Calu3 (cell line): ENCODE measurements at regions of chr3 and their contacts with region 1.

Region 1: GRCh38 chr3:12522721-12523120 is 22.6 kb downstream of the MKRN2OS start:
- DNase-seq: no peak
- H3K4me3 Mint-ChIP-seq: no peak overlapping the region
- H3K27ac Mint-ChIP-seq: no peak overlapping the region
- H3K4me1 Mint-ChIP-seq: no peaks in the 10 kb centered on the region
- H3K27me3 Mint-ChIP-seq: no peaks in the 10 kb centered on the region
- CTCF ChIP-seq: no peak

Region 2: GRCh38 chr3:12294885-12295580 is 227.7 kb before region 1 on chr3:
- CTCF ChIA-PET with region 1: no interaction called
- intact Hi-C with region 1: no loop called
- DNase-seq: no peak
- H3K4me3 Mint-ChIP-seq: peak overlapping the region; percentile 84
- H3K27ac Mint-ChIP-seq: no peak overlapping the region
- H3K4me1 Mint-ChIP-seq: peaks cover 31% of the 10 kb centered on the region
- H3K27me3 Mint-ChIP-seq: no peaks in the 10 kb centered on the region
- CTCF ChIP-seq: no peak

Region 3: DNA sequence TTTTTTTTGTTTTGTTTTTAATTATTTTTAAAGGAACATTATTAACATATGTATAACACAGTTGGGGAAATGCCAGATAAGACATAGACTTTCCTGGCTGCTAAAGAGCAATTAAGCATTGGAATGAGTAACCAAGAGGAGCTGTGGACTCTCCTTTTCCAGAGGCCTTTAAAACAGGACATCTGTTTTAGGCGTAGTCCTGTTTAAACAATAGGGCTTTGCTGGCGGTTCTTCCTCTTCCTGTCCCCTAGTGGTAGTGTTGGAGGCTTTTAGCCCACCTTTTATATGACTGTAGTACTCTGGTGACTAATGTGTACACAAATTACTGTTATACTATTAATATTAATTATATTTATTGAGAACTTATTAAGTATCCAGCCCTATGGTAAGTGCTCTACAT is 152.0 kb before region 1 on chr3:
- CTCF ChIA-PET with region 1: no interaction called
- intact Hi-C with region 1: no loop called
- DNase-seq: no peak
- H3K4me3 Mint-ChIP-seq: no peak overlapping the region
- H3K27ac Mint-ChIP-seq: no peak overlapping the region
- H3K4me1 Mint-ChIP-seq: peaks cover 33% of the 10 kb centered on the region
- H3K27me3 Mint-ChIP-seq: no peaks in the 10 kb centered on the region
- CTCF ChIP-seq: no peak

Region 4: GRCh38 chr3:13034109-13034800 is 511.5 kb after region 1 on chr3:
- CTCF ChIA-PET with region 1: no interaction called
- intact Hi-C with region 1: no loop called
- DNase-seq: no peak
- H3K4me3 Mint-ChIP-seq: no peak overlapping the region
- H3K27ac Mint-ChIP-seq: no peak overlapping the region
- H3K4me1 Mint-ChIP-seq: peaks cover 12% of the 10 kb centered on the region
- H3K27me3 Mint-ChIP-seq: peaks cover 57% of the 10 kb centered on the region
- CTCF ChIP-seq: no peak

Region 5: DNA sequence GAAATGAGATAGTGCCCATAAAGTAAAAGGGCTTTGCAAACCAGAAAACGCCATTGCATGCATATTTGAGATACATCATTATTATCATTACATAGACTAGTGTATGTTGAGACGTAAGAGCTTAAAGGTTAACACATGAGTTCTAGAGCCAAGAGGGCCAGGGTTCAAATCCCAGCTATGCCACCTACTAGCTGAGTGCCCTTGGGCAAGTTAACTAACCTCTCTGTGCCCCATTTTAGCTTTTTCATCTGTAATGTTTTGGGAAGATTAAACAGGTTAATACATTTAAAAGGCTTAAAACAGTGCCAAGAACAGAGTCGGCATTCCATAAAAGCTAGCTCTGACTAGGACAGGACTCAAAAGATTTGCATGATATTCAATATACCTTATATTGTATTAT is 527.7 kb after region 1 on chr3:
- CTCF ChIA-PET with region 1: interaction called, 11 read pairs
- intact Hi-C with region 1: no loop called
- DNase-seq: no peak
- H3K4me3 Mint-ChIP-seq: no peak overlapping the region
- H3K27ac Mint-ChIP-seq: no peak overlapping the region
- H3K4me1 Mint-ChIP-seq: no peaks in the 10 kb centered on the region
- H3K27me3 Mint-ChIP-seq: peaks cover 48% of the 10 kb centered on the region
- CTCF ChIP-seq: no peak